ENCODE measurements at regions of chr2 and their contacts with region 1.

Region 1: DNA sequence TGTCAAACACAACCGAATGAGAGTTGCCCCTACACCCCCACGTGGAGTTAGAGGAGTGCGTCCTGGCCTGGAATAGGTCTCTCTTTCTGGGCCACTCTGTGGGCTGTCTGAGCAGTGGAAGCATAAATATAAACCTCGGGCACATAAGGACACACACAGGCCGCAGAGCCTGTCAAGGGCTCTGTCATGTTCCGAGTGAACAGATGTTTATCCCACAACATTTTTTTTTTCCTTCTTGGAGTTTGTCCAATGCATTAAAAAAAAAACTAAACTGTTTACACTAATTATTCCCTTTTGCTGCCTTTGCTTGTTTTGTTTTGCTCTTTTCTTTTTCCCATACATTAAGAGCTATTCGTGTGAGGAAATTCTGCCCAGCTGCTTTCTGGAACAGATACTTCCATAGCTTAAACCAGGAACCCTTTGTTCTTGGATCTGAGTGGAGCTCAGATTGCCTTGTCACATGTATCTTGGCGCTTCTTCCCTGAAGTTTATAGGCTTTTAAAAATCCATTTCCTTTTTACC is 228.3 kb upstream of the FOSL2 start:
- DNase-seq: peak; percentile 30 to 60 (median 50)
- ATAC-seq: peak; percentile 95 to 97 (median 96)
- H3K4me3 ChIP-seq: peak overlapping the region in 1 of 12 donors; percentile 2
- H3K27ac ChIP-seq: peak overlapping the region; percentile 33 to 87 (median 69)
- H3K4me1 ChIP-seq: peaks cover 2 to 57% (median 29%) of the 10 kb centered on the region in 12 donors
- H3K27me3 ChIP-seq: no peaks in the 10 kb centered on the region
- CTCF ChIP-seq: no peak
- POLR2A ChIP-seq: no peak

Region 2: DNA sequence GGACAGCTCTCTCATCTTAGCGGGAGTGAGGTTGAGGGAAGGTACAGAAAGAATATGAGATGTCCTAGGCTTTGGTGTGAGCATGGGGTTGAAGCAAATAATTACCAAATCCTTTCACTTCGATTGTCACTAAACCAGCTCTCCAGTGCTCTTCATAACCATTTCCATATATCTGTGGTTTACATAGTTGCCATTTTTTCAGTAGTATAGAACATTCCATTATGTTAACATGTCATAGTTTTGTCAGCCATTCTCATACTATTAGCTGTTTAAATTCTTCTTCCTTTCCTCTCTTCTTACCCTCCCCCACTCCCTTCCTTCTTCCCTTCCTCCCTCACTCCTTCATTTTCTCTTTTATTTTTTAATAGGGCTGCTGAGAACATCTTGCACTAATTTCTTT is 67.9 kb before region 1 on chr2:
- intact Hi-C with region 1: loop called in 1 of 10 experiments (anchors 5 kb)
- DNase-seq: no peak
- ATAC-seq: no peak
- H3K4me3 ChIP-seq: no peak overlapping the region
- H3K27ac ChIP-seq: peak overlapping the region in 1 of 12 donors; percentile 32
- H3K4me1 ChIP-seq: peaks cover 0 to 45% (median 6%) of the 10 kb centered on the region in 12 donors
- H3K27me3 ChIP-seq: no peaks in the 10 kb centered on the region
- CTCF ChIP-seq: no peak
- POLR2A ChIP-seq: no peak

Region 3: GRCh38 chr2:28219138-28219537 is 54.8 kb after region 1 on chr2:
- intact Hi-C with region 1: loop called in 1 of 10 experiments (anchors 5 kb)
- DNase-seq: no peak
- ATAC-seq: no peak
- H3K4me3 ChIP-seq: no peak overlapping the region
- H3K27ac ChIP-seq: no peak overlapping the region
- H3K4me1 ChIP-seq: peaks cover 0 to 7% (median 0%) of the 10 kb centered on the region in 12 donors
- H3K27me3 ChIP-seq: no peaks in the 10 kb centered on the region
- CTCF ChIP-seq: no peak
- POLR2A ChIP-seq: no peak